Gastrocnemius medialis (tissue), 4 donors: ENCODE measurements at regions of chr1 and their contacts with region 1.

Region 1: GRCh38 chr1:201361652-201362504 is 15.6 kb downstream of the TNNT2 start:
- DNase-seq: peak in 1 of 2 donors; percentile 35
- ATAC-seq: peak in 1 of 2 donors; percentile 58
- H3K4me3 ChIP-seq: no peak overlapping the region
- H3K27ac ChIP-seq: no peak overlapping the region
- H3K4me1 ChIP-seq: peaks cover 0 to 4% of the 10 kb centered on the region in 2 donors
- H3K27me3 ChIP-seq: no peaks in the 10 kb centered on the region
- CTCF ChIP-seq: peak; percentile 70 to 88 (median 85)
- POLR2A ChIP-seq: no peak

Region 2: DNA sequence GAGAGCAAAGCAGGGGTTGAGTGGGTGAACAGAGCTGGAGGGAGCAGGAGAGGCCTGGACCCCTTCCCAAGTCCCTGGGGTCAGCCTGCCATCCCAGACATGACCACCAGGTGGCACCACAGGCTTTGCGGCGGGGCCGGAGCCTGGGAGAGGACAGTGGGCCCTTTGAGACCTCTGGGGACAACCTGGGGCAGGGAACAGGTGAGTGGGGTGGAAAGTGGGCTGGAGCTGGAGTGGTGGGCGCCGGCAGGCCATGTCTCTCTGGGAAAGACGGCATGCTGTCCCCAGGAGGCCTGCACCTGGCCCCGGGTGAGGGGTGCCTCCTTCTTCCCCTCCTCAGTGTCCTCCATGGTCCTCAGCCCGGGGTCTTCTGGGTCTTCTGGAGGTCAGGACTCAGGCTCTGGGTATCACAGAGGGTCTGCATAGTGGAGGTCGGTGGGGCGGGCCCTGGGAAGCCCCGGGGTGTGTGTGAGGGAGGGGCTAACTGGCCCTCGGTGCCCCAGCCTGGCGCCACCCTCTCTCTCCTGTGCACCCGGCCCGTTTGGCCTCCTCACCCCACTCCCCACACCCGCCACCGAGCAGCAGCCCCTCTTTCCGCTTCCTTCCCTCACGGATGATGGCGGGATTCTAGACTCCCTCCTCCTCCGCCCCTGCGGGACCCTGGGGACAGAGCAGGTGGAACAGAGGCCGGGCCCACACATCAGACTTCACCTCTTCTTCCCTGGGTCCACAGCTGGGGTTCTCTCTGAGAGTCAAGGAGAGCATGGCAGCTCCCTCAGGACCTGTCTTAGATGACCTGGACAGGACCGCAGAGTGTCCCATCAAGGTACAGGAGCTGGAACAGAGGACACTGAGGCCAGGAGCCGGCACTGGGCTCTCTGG is 107.0 kb before region 1 on chr1:
- in situ Hi-C with region 1: loop called (anchors 10 to 25 kb)
- intact Hi-C with region 1: loop called (anchors 1 kb)
- DNase-seq: peak in 1 of 2 donors; percentile 53
- ATAC-seq: peak; percentile 57 to 87
- H3K4me3 ChIP-seq: no peak overlapping the region
- H3K27ac ChIP-seq: no peak overlapping the region
- H3K4me1 ChIP-seq: no peaks in the 10 kb centered on the region
- H3K27me3 ChIP-seq: peaks cover under 1 to 9% (median 7%) of the 10 kb centered on the region in 3 donors
- CTCF ChIP-seq: peak; percentile 94 to 99 (median 97)
- POLR2A ChIP-seq: no peak

Region 3: DNA sequence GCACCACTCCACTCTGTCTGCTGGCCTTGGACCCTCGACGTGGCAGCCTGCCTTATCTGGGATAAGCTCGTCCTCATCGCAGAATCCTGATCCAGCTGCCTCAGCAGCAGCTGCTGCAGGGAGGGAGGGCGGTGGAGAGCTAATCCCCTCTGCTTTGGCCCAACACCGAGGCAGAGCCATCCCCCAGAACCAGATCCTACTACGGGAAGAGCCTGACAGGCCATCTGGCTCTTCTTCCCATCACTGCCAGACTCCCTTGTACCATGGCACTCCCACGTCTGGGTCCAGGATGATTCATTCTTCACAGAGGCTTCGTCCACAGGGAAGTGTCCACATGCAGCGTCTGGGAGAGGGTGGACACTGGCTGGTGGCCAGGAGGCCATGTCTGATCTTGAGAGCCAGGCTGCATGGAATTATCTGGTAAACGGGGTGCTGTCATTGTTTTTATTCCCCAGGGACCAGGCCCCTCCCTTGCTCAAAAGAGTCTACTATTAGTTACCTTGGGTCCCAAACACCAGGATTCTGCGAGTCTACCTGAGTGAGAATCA is 93.2 kb before region 1 on chr1:
- in situ Hi-C with region 1: loop called (anchors 10 to 25 kb)
- intact Hi-C with region 1: no loop called
- DNase-seq: no peak
- ATAC-seq: peak in 1 of 2 donors; percentile 44
- H3K4me3 ChIP-seq: no peak overlapping the region
- H3K27ac ChIP-seq: no peak overlapping the region
- H3K4me1 ChIP-seq: no peaks in the 10 kb centered on the region
- H3K27me3 ChIP-seq: peaks cover 0 to 10% (median 2%) of the 10 kb centered on the region in 3 donors
- CTCF ChIP-seq: no peak
- POLR2A ChIP-seq: no peak

Region 4: DNA sequence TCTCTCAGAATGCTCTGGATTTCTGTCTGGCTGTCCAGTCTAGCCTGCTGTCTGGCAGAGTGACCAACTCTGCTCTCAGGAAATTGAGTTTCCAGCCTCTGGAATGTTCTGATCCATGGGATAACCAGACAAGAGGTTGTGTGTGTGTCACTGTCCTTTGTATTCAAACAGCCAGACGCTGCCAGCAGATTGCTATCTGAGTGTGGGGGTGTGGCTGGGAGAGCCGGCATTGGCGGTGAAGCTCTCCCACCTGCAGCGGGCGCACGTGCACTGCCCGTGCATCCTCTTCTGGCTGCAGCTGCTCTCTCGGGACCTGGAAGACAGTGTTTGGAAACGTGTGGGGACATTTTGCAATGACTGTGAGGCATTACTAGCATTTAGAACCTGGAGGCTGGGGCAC is 52.5 kb before region 1 on chr1:
- in situ Hi-C with region 1: no loop called
- intact Hi-C with region 1: loop called (anchors 1 kb)
- DNase-seq: peak; percentile 83 to 91
- ATAC-seq: peak; percentile 91 to 92
- H3K4me3 ChIP-seq: no peak overlapping the region
- H3K27ac ChIP-seq: peak overlapping the region; percentile 60 to 78 (median 72)
- H3K4me1 ChIP-seq: peaks cover 21 to 28% of the 10 kb centered on the region in 2 donors
- H3K27me3 ChIP-seq: no peaks in the 10 kb centered on the region
- CTCF ChIP-seq: peak in 2 of 5 experiments; percentile 33 to 35
- POLR2A ChIP-seq: peak in 1 of 2 donors; percentile 27

Region 5: GRCh38 chr1:201946224-201946908 is 584.5 kb after region 1 on chr1 and contains the start of gene LMOD1:
- in situ Hi-C with region 1: no loop called
- intact Hi-C with region 1: no loop called
- DNase-seq: peak; percentile 79 to 84
- ATAC-seq: peak; percentile 73 to 76
- H3K4me3 ChIP-seq: peak within 1 kb of the TSS; percentile 57 to 74 (median 62)
- H3K27ac ChIP-seq: peak within 1 kb of the TSS; percentile 82 to 84 (median 84)
- H3K4me1 ChIP-seq: peaks cover 29 to 32% of the 10 kb centered on the region in 2 donors
- H3K27me3 ChIP-seq: no peaks in the 10 kb centered on the region
- CTCF ChIP-seq: no peak
- POLR2A ChIP-seq: peak; percentile 56 to 59
- total RNA-seq, gene LMOD1: 12.8 to 39.5 (median 22.6) TPM